A549 (cell line): ENCODE measurements at regions of chr12 and their contacts with region 1.

Region 1: GRCh38 chr12:120429368-120429767 is 8.5 kb upstream of the COX6A1 start:
- DNase-seq: no peak
- ATAC-seq: no peak
- H3K4me3 ChIP-seq: no peak overlapping the region
- H3K27ac ChIP-seq: no peak overlapping the region
- H3K4me1 ChIP-seq: no peaks in the 10 kb centered on the region
- CTCF ChIP-seq: no peak
- EP300 ChIP-seq: no peak
- POLR2A ChIP-seq: no peak
- RAD21 ChIP-seq: no peak

Region 2: GRCh38 chr12:120327593-120327992 is 101.8 kb before region 1 on chr12 and contains the start of gene PLA2G1B:
- CTCF ChIA-PET with region 1: interaction called, 13 read pairs
- POLR2A ChIA-PET with region 1: no interaction called
- DNase-seq: no peak
- ATAC-seq: no peak
- H3K4me3 ChIP-seq: no peak within 1 kb of the TSS
- H3K27ac ChIP-seq: no peak within 1 kb of the TSS
- H3K4me1 ChIP-seq: no peaks in the 10 kb centered on the region
- CTCF ChIP-seq: no peak
- EP300 ChIP-seq: no peak
- POLR2A ChIP-seq: no peak
- RAD21 ChIP-seq: no peak
- polyA plus RNA-seq, gene PLA2G1B: 0.21 TPM in 1 of 2 replicates, not detected in the other

Region 3: DNA sequence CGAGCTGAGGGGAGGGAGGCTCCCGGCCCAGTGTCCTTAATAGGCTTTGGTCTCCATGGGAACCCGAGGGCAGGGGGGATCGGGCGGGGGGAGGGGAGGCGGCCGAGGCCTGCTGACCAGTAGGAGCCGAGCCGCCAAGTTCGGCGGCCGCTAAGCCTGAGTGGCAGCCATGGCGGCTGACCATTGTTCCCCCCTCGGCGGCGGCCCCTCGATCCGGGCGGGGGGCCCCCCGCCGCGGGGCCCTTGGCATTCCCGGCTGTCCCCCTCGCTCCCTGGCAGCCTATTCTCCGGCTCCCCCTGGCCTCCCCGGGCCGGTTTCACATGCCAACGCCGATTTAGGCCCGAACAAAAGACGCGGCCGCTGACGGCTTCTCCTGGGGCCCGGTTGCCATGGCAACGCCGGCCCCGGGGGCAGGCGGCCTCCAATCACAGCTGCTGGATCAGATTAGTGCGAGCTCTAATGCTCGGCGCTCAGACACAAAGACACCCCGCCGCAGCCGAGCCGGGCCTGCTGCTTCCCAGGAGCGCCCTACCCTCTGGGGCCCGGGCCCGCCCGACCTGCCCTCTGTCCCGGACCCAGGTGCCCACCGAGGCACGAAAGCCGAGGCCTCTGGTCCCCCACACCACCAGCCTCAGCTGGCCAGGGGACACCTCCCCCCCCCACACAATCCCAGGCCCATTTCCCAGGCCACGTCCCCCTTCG is 67.7 kb before region 1 on chr12:
- CTCF ChIA-PET with region 1: interaction called, 41 read pairs
- POLR2A ChIA-PET with region 1: no interaction called
- DNase-seq: no peak
- ATAC-seq: no peak
- H3K4me3 ChIP-seq: no peak overlapping the region
- H3K27ac ChIP-seq: no peak overlapping the region
- H3K4me1 ChIP-seq: no peaks in the 10 kb centered on the region
- CTCF ChIP-seq: no peak
- EP300 ChIP-seq: no peak
- POLR2A ChIP-seq: no peak
- RAD21 ChIP-seq: no peak

Region 4: GRCh38 chr12:120367233-120367923 is 62.0 kb before region 1 on chr12:
- CTCF ChIA-PET with region 1: interaction called, 29 read pairs
- POLR2A ChIA-PET with region 1: no interaction called
- DNase-seq: peak in 1 of 2 experiments; percentile 52
- ATAC-seq: peak in 1 of 2 experiments; percentile 47; a peak in 3 of 6 replicates
- H3K4me3 ChIP-seq: no peak overlapping the region
- H3K27ac ChIP-seq: no peak overlapping the region
- H3K4me1 ChIP-seq: peaks cover 14% of the 10 kb centered on the region; the same call in 2 of the 3 replicates
- CTCF ChIP-seq: peak; percentile 39; the same call in 2 of the 3 replicates
- EP300 ChIP-seq: no peak
- POLR2A ChIP-seq: no peak
- RAD21 ChIP-seq: no peak

Region 5: GRCh38 chr12:120381752-120382419 is 47.5 kb before region 1 on chr12:
- CTCF ChIA-PET with region 1: interaction called, 11 read pairs
- POLR2A ChIA-PET with region 1: no interaction called
- DNase-seq: peak in 1 of 2 experiments; percentile 39
- ATAC-seq: peak; percentile 43 to 79; a peak in 5 of 6 replicates
- H3K4me3 ChIP-seq: no peak overlapping the region
- H3K27ac ChIP-seq: no peak overlapping the region
- H3K4me1 ChIP-seq: 0 out of 3 replicates have a peak, but pooled peaks cover 3% of the 10 kb centered on the region
- CTCF ChIP-seq: no peak
- EP300 ChIP-seq: no peak
- POLR2A ChIP-seq: no peak
- RAD21 ChIP-seq: no peak